Gastrocnemius medialis (tissue), 4 donors: ENCODE measurements at regions of chr3 and their contacts with region 1.

Region 1: DNA sequence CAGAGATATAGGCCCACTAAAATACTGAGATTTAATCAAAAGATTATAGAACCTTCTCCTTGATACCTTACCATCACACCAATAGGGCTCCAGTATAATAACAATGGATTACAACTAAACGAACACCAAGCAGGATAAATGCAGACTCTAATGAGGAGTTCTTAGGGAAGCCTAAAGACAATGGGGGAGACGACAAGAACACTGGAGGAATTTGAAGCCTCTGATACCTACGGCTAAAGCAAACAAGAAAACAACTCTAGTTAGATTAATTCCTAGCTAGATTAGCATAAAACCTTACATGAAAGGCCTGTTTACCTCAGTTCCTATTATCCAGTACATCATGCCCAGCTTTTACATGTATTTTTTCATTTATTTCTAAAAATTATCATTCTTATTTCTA is 35.1 kb downstream of the NGLY1 start:
- DNase-seq: no peak
- ATAC-seq: no peak
- H3K4me3 ChIP-seq: no peak overlapping the region
- H3K27ac ChIP-seq: no peak overlapping the region
- H3K4me1 ChIP-seq: no peaks in the 10 kb centered on the region
- H3K27me3 ChIP-seq: no peaks in the 10 kb centered on the region
- CTCF ChIP-seq: no peak
- POLR2A ChIP-seq: no peak

Region 2: GRCh38 chr3:25723802-25724201 is 24.4 kb before region 1 on chr3:
- in situ Hi-C with region 1: no loop called
- intact Hi-C with region 1: loop called (anchors 1 kb)
- DNase-seq: no peak
- ATAC-seq: no peak
- H3K4me3 ChIP-seq: no peak overlapping the region
- H3K27ac ChIP-seq: no peak overlapping the region
- H3K4me1 ChIP-seq: no peaks in the 10 kb centered on the region
- H3K27me3 ChIP-seq: no peaks in the 10 kb centered on the region
- CTCF ChIP-seq: no peak
- POLR2A ChIP-seq: no peak